ENCODE measurements at regions of chr17 and their contacts with region 1.

Region 1: GRCh38 chr17:996554-997344 is at the start of gene TIMM22:
- ATAC-seq: peak; percentile 91 to 98 (median 96)
- H3K4me3 ChIP-seq: peak within 1 kb of the TSS; percentile 56 to 92 (median 69)
- H3K27ac ChIP-seq: peak within 1 kb of the TSS; percentile 97 to 98
- H3K4me1 ChIP-seq: peaks cover 5 to 9% of the 10 kb centered on the region in 2 donors
- total RNA-seq, gene TIMM22: 8.2 to 19.8 (median 14.2) TPM

Region 2: GRCh38 chr17:633641-634101 is 363.1 kb before region 1 on chr17:
- in situ Hi-C with region 1: no loop called
- ATAC-seq: peak in 7 of 8 experiments; percentile 34 to 89 (median 75)
- H3K4me3 ChIP-seq: no peak overlapping the region
- H3K27ac ChIP-seq: no peak overlapping the region
- H3K4me1 ChIP-seq: peaks cover 0 to 4% of the 10 kb centered on the region in 2 donors

Region 3: DNA sequence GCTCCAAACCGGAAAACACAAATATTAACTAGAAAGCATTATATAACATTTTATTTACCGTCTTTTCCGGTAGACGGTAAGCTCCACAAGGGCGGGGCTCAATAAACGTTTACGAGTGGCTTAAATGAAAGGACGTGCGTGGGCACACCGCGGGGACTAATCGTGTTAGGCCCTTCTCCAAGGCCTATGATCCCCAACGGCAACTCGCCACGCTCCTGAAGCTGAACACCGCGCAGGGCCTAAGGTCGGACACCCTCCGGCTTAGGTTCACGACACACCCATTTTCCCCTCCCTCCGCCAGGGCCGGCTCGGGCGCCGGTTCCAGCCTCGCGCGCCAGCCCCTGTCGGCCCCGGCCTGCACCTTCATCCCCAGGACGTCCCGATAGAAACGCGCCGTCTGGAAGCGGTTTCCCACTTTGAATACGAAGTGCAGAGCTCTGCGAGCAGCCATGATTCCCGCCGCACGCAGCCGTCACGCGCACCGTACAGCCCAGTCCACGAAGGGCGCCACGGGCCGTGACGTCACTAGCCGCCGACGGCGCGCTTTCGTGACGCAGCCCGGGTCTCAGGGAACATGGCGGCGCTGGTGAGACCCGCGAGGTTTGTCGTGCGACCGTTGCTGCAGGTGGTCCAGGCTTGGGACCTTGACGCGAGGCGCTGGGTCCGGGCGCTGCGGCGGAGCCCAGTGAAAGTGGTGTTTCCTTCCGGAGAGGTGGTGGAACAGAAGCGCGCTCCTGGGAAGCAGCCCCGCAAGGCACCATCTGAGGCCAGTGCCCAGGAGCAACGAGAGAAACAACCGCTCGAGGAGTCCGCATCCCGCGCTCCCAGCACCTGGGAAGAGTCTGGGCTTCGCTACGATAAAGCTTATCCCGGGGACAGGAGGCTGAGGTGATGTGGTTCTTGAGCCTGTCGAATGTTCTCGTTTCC is 214.7 kb before region 1 on chr17 and contains the starts of genes GLOD4 and MRM3:
- in situ Hi-C with region 1: loop called in 1 of 9 experiments (anchors 25 kb)
- ATAC-seq: peak; percentile 94 to 98 (median 97)
- H3K4me3 ChIP-seq: peak within 1 kb of the TSS; percentile 71 to 94 (median 82)
- H3K27ac ChIP-seq: peak within 1 kb of the TSS; percentile 84 to 89
- H3K4me1 ChIP-seq: peaks cover 12 to 19% of the 10 kb centered on the region in 2 donors
- total RNA-seq, gene GLOD4: 50.8 to 90.4 (median 60.2) TPM
- total RNA-seq, gene MRM3: 13.4 to 30.6 (median 20.9) TPM

Region 4: DNA sequence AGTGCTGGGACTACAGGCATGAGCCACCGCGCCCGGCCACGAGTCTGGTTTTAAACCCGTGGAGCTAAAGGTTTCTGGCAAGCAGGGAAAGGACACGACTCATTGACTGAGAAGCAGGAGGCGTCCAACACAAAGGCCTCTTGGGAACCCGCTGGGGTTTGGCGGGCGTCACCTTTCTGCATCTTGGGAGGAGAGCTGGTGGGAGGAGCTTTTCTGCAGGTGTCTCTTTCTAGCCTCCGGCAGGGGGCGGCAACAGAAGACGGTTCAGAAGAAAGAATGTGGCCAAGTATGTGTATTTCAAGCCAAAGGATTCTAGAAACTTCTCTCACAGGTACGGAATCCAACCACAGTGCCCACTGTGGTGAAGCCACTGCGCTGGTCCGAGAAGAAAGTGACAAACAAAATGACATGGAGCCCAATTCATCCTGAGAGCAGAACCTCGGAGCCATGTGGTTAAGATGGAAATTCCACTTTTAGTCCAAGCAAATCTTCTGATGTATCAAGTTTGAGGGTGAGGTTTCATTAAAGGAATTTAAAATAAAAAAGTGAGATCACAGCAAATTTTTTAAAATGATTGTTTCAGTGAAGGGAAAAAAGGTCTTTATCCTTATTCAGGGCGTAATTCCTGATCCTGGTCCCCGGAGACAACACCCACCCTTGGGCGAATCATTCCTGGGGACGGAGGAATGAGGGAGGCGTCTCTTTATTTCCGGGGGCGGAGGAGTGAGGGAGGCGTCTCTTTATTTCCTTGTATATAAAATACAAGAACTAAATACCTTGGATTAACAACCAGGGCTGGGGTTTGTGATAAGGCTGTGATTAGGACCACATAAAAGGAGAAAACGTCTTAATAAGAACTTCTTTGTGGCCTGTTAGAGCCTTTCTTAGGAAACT is 117.0 kb before region 1 on chr17:
- in situ Hi-C with region 1: no loop called
- ATAC-seq: peak in 1 of 8 experiments; percentile 64
- H3K4me3 ChIP-seq: no peak overlapping the region
- H3K27ac ChIP-seq: no peak overlapping the region
- H3K4me1 ChIP-seq: peaks cover 30 to 43% of the 10 kb centered on the region in 2 donors

Region 5: GRCh38 chr17:1087381-1088241 is 90.9 kb after region 1 on chr17:
- in situ Hi-C with region 1: no loop called
- ATAC-seq: peak in 7 of 8 experiments; percentile 68 to 87 (median 71)
- H3K4me3 ChIP-seq: no peak overlapping the region
- H3K27ac ChIP-seq: peak overlapping the region; percentile 27 to 58
- H3K4me1 ChIP-seq: peaks cover 24 to 26% of the 10 kb centered on the region in 2 donors

Region 6: GRCh38 chr17:1153795-1154546 is 157.2 kb after region 1 on chr17:
- in situ Hi-C with region 1: no loop called
- ATAC-seq: peak; percentile 78 to 97 (median 90)
- H3K4me3 ChIP-seq: no peak overlapping the region
- H3K27ac ChIP-seq: peak overlapping the region; percentile 69 to 75
- H3K4me1 ChIP-seq: peaks cover 15 to 18% of the 10 kb centered on the region in 2 donors

Measured in motor neuron (in vitro differentiated cells).